Heart left ventricle (tissue), 16 donors: ENCODE measurements at regions of chrX and their contacts with region 1.

Region 1: DNA sequence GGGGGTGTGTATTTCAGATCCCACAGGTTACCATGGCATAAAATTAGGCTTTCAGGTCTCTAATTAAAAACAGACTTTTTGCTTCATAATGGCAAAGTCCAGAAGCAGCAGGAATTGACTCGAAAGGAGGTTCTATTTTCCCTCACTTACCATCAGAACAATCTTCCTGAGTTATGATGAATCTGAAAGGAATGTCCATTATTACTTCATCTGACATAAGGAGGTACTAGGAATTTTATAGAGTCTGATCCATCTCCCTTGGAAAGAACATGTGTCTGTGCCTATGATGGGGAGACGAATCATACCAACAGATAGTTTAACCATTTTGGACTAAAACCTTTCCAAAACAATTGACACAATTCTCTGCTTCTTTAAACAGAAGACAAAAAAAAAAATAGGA is 206.3 kb upstream of the FGF13 start:
- DNase-seq: no peak
- ATAC-seq: no peak
- H3K4me3 ChIP-seq: no peak overlapping the region
- H3K27ac ChIP-seq: no peak overlapping the region
- H3K4me1 ChIP-seq: no peaks in the 10 kb centered on the region
- H3K27me3 ChIP-seq: peaks cover 0 to 9% (median 0%) of the 10 kb centered on the region in 9 donors
- CTCF ChIP-seq: no peak
- POLR2A ChIP-seq: no peak

Region 2: DNA sequence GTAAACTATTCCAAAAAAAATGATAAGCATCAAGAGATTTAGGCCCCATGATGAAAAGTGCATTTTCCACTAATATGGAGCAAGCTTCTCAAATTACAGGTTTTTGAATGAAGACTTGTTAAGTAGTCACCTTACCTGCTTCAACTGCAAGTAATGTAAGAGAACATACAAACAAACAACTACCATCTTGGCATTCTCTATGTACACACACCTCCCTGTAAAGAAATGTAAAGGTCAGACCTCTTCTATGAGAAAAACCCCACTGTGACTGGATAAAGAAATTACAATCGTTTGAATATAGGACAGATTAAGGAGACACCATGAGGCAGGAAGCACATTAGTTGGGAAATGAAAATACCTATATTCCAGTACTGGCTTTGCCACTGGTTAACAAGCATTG is 61.1 kb after region 1 on chrX:
- intact Hi-C with region 1: loop called in 1 of 10 experiments (anchors 10 kb)
- DNase-seq: no peak
- ATAC-seq: no peak
- H3K4me3 ChIP-seq: no peak overlapping the region
- H3K27ac ChIP-seq: no peak overlapping the region
- H3K4me1 ChIP-seq: peaks cover 0 to 6% (median 0%) of the 10 kb centered on the region in 12 donors
- H3K27me3 ChIP-seq: peaks cover 0 to 6% (median 0%) of the 10 kb centered on the region in 9 donors
- CTCF ChIP-seq: no peak
- POLR2A ChIP-seq: no peak

Region 3: DNA sequence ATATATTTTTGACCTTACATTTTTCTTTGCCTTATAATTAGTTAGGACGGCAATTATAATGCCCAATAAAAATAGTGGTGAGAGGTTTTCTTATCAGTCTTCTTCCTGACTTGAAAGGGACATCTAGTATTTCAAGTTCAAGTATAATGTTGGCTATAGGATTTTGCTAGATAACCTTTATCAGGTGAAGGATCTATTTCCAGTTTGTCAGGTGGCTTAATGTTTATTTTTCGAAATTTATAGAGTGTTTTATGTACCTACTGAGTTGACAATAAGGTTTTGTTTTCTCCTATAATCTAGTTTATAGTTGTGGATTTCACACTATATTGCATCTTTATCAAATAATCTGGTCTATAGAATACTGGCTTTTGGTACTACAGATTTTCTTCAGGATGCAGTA is 145.6 kb after region 1 on chrX:
- intact Hi-C with region 1: no loop called
- DNase-seq: no peak
- ATAC-seq: no peak
- H3K4me3 ChIP-seq: no peak overlapping the region
- H3K27ac ChIP-seq: no peak overlapping the region
- H3K4me1 ChIP-seq: no peaks in the 10 kb centered on the region
- H3K27me3 ChIP-seq: peaks cover 0 to 6% (median 0%) of the 10 kb centered on the region in 9 donors
- CTCF ChIP-seq: no peak
- POLR2A ChIP-seq: no peak

Region 4: DNA sequence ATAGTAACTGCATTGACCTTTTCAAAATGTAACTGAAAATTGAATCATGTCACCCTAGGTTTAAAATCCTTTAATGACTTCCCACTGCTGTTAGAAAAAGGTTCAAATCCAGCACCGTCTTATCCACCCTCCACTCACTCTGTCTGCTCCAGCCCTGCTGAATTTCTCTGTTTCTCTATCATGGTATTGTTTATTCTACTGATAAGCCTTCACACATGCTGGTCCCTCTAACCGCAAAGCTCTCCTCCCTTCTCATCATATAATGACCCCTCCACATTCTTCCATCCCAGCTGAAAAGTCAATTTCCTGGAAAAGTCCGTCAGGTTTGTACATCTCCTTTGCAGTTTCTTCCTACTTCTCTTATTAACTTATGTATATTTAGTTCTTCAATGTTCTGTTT is 223.6 kb after region 1 on chrX:
- intact Hi-C with region 1: no loop called
- DNase-seq: no peak
- ATAC-seq: no peak
- H3K4me3 ChIP-seq: no peak overlapping the region
- H3K27ac ChIP-seq: no peak overlapping the region
- H3K4me1 ChIP-seq: no peaks in the 10 kb centered on the region
- H3K27me3 ChIP-seq: no peaks in the 10 kb centered on the region
- CTCF ChIP-seq: no peak
- POLR2A ChIP-seq: no peak

Region 5: GRCh38 chrX:139382529-139382928 is 464.7 kb after region 1 on chrX:
- intact Hi-C with region 1: no loop called
- DNase-seq: no peak
- ATAC-seq: no peak
- H3K4me3 ChIP-seq: no peak overlapping the region
- H3K27ac ChIP-seq: no peak overlapping the region
- H3K4me1 ChIP-seq: no peaks in the 10 kb centered on the region
- H3K27me3 ChIP-seq: no peaks in the 10 kb centered on the region
- CTCF ChIP-seq: no peak
- POLR2A ChIP-seq: no peak